ENCODE measurements at regions of chr10 and their contacts with region 1.

Region 1: DNA sequence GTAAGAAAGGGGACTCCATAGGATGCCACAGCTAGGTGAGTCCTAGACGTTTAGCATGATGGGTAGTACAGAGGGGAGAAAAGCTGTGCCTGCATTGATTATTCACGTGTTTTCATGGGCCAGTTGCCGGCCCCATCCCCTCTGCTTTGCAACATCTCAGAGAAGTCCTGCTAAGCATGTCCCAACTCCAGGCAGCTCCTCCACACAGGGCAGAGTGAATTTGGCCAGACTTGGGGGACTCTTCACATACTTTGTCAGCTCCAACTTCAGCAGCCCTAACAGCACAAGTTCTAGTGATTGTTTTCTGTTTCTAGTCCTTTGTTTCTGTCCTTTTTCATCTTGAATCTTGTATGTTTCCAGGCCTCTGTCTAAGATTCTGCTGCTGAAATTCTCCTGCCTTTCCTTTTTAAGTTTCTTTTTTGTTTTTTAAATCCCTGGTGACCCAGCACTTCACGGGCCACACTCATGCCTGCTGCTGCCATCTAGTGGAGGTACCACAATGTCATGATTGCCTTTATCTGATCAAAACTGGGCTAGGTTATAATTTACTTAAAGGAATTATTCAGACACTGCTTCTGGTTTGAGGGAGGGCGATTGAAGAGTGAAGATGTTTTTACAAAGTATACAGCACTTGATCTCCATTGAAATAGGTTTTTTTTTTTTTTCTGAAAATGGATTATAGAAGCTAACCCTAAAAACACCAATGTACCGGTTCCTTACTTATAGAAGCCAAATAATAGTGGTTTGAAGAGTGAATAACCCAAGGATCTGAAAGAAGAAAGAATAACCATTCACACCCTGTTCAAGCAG is 276.9 kb downstream of the CSTF2T start:
- DNase-seq: peak; percentile 20
- CTCF ChIP-seq: peak; percentile 63

Region 2: GRCh38 chr10:51638737-51639136 is 216.2 kb after region 1 on chr10:
- in situ Hi-C with region 1: no loop called
- DNase-seq: no peak
- CTCF ChIP-seq: no peak

Region 3: DNA sequence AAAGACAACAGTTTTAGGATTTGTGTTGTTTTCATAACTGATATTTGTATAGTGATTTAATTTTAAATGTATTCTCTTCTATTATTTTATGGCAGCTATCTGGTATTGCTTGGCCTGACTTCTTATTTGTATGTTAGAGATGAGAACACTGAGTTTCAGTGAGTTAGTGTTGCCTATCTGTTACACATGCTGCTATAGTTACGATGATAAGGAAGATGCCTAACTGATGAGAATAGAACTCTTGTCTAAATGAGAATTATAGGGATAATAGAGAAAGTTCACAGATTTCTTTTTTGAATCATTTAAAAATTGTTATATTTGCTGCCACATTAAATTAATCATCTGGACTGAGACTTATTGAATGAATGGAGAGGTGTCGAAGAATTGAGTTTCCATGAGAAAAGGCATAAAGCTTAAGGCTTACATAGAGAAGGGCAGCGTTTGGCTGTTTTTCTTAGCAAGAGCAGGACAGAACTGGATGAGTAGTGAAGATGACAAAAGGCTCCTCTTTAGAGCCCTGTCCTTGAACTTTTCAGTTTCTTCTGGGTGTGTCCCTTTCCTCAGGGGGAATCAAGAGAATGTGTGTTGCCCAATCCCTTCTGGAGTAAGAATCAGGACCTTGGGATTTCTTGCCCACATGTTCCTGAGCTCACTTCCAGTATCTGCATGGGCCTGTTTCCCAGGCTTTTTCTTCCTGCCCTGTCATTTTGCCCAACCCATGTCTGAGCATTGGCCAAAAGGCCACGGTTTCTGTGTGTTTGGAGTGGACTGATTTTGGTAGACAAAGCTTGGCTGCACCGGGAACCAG is 472.5 kb after region 1 on chr10:
- in situ Hi-C with region 1: no loop called
- DNase-seq: no peak
- CTCF ChIP-seq: no peak

Region 4: DNA sequence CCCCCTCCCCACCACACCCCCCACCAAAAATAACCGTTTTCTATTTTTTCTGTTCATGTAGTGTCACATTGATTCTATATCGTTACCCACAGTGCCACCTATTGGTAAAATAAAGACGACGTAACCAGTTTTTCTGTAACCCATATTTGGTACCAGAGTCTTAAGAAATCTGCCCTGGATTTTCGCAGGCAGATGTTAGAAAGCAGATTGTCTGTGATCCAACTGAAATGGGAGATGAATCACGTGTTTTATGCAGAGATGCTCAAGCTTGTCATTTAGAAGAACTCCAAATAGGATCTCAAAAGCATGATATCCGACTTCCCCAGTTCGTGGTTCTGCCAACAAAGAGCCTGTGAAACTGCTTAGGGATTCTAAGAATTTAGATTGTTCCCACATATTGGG is 538.0 kb after region 1 on chr10:
- in situ Hi-C with region 1: loop called (anchors 25 kb)
- DNase-seq: peak; percentile 27
- CTCF ChIP-seq: peak; percentile 23